ENCODE measurements at regions of chr4 and their contacts with region 1.

Region 1: GRCh38 chr4:56799824-56800756 is 21.4 kb downstream of the SPINK2 start:
- DNase-seq: peak; percentile 80 to 89 (median 84)
- ATAC-seq: peak; percentile 91 to 99 (median 98)
- H3K4me3 ChIP-seq: peak overlapping the region; percentile 42 to 86 (median 63)
- H3K27ac ChIP-seq: peak overlapping the region in 11 of 12 donors; percentile 6 to 75 (median 60)
- H3K4me1 ChIP-seq: peaks cover 0 to 6% (median 0%) of the 10 kb centered on the region in 12 donors
- H3K27me3 ChIP-seq: no peaks in the 10 kb centered on the region
- CTCF ChIP-seq: peak; percentile 79 to 97 (median 89)
- POLR2A ChIP-seq: no peak

Region 2: GRCh38 chr4:56410235-56411062 is 389.6 kb before region 1 on chr4:
- intact Hi-C with region 1: loop called in 1 of 10 experiments (anchors 10 kb)
- DNase-seq: peak in 2 of 5 donors; percentile 59 to 71
- ATAC-seq: peak; percentile 81 to 98 (median 96)
- H3K4me3 ChIP-seq: peak overlapping the region in 11 of 12 donors; percentile 14 to 48 (median 36)
- H3K27ac ChIP-seq: peak overlapping the region in 9 of 12 donors; percentile 3 to 71 (median 35)
- H3K4me1 ChIP-seq: peaks cover 0 to 20% (median 7%) of the 10 kb centered on the region in 12 donors
- H3K27me3 ChIP-seq: no peaks in the 10 kb centered on the region
- CTCF ChIP-seq: no peak
- POLR2A ChIP-seq: no peak

Region 3: DNA sequence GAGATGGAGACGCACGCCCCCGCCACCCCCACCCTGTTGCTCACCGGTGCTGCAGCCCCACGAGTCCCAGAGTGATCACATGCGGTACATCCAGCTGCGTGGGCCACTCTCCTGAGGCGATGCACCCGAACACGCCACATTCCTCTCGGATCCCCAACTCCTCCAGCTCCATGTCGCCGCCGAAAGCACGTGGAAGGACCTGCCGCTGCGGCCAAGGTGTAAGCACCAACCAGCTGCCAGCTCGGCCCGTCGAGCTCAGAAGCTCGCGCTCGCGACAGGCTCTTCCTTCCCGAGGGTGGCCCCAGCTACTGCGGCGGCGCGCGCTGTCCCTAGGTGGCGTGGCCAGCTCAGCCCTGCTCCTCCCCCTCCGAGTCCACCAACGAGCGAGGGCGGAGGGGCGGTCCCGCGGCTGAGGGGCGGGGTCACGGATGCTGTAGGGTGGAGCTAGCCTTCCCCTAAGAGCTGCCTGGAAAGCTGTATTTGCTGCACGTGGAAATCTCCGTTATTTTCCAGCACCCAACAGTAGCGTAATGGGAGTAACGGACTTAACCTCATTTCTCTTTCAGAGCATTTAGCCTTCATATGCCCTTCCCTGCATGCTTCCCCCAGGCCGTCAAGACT is 364.7 kb before region 1 on chr4 and contains the start of gene PPAT:
- intact Hi-C with region 1: loop called in 1 of 10 experiments (anchors 5 kb)
- DNase-seq: peak; percentile 97 to 99 (median 98)
- ATAC-seq: peak; percentile 95 to 98 (median 97)
- H3K4me3 ChIP-seq: peak within 1 kb of the TSS; percentile 55 to 85 (median 74)
- H3K27ac ChIP-seq: peak within 1 kb of the TSS; percentile 66 to 99 (median 93)
- H3K4me1 ChIP-seq: peaks cover 0 to 22% (median 14%) of the 10 kb centered on the region in 12 donors
- H3K27me3 ChIP-seq: no peaks in the 10 kb centered on the region
- CTCF ChIP-seq: peak in 11 of 12 donors; percentile 23 to 66 (median 40)
- POLR2A ChIP-seq: peak in 1 of 2 donors; percentile 43
- total RNA-seq, gene PPAT: 2.1 to 6.5 (median 3.7) TPM

Region 4: GRCh38 chr4:56575820-56576429 is 224.2 kb before region 1 on chr4:
- intact Hi-C with region 1: loop called in 9 of 10 experiments (anchors 1 to 10 kb)
- DNase-seq: no peak
- ATAC-seq: no peak
- H3K4me3 ChIP-seq: no peak overlapping the region
- H3K27ac ChIP-seq: no peak overlapping the region
- H3K4me1 ChIP-seq: no peaks in the 10 kb centered on the region
- H3K27me3 ChIP-seq: no peaks in the 10 kb centered on the region
- CTCF ChIP-seq: peak; percentile 25 to 59 (median 42)
- POLR2A ChIP-seq: no peak

Region 5: DNA sequence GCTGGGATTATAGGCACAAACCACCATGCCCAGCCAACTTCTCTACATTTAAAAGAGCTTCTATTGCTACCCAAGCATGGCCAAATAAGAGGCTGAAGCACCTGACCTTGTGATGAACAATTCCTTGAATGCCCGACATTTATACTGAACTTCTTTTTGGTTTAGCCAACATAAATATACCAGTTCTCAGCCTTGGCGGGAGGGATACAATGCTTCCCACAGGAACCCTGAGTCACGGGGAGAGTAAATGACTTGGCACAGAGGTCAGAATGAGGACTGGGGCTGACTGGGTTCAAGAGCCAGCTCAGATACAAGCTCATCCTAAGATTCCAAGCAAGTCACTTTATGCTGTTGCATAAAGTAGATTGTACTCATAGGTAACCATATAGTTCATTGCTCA is 125.1 kb before region 1 on chr4:
- intact Hi-C with region 1: loop called in 1 of 10 experiments (anchors 10 kb)
- DNase-seq: no peak
- ATAC-seq: no peak
- H3K4me3 ChIP-seq: no peak overlapping the region
- H3K27ac ChIP-seq: no peak overlapping the region
- H3K4me1 ChIP-seq: peaks cover 0 to 6% (median 0%) of the 10 kb centered on the region in 12 donors
- H3K27me3 ChIP-seq: no peaks in the 10 kb centered on the region
- CTCF ChIP-seq: no peak
- POLR2A ChIP-seq: no peak

Region 6: DNA sequence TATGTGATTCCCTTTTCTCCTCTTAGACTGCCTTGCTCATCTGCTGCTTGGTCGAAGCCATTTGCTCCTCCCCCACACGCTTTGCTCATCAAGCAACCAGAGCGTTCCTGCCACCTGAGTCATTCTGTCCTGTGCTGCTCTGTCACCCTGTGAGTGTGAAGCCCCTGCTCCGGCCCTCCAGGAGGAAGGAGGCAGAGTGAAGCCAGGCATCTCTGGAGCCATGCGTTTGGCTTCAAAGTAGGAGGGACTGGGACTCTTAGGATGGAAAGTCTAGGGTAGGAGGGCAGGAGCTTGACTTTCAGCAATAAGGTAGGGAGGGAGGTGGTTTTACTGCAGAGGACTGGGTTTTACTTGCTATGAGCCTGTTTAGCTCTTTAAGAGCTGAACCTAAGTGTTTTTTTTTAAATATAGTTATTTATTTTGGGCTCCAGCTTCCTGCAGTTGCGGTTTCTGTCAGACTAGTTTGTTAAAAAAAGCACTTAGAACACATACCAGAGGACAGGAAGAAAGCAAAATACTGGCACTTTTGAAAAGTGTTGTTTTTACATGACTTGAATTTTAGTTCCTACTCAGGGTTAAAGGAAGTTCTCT is 42.2 kb before region 1 on chr4:
- intact Hi-C with region 1: no loop called
- DNase-seq: peak in 2 of 5 donors; percentile 11 to 37
- ATAC-seq: peak in 2 of 4 donors; percentile 18 to 45
- H3K4me3 ChIP-seq: peak overlapping the region in 1 of 12 donors; percentile 16
- H3K27ac ChIP-seq: peak overlapping the region in 3 of 12 donors; percentile 19 to 70 (median 60)
- H3K4me1 ChIP-seq: peaks cover 0 to 36% (median 0%) of the 10 kb centered on the region in 12 donors
- H3K27me3 ChIP-seq: peaks cover 0 to 4% (median 0%) of the 10 kb centered on the region in 9 donors
- CTCF ChIP-seq: no peak
- POLR2A ChIP-seq: no peak